Adrenal gland (tissue), 19 donors: ENCODE measurements at regions of chr14 and their contacts with region 1.

Region 1: DNA sequence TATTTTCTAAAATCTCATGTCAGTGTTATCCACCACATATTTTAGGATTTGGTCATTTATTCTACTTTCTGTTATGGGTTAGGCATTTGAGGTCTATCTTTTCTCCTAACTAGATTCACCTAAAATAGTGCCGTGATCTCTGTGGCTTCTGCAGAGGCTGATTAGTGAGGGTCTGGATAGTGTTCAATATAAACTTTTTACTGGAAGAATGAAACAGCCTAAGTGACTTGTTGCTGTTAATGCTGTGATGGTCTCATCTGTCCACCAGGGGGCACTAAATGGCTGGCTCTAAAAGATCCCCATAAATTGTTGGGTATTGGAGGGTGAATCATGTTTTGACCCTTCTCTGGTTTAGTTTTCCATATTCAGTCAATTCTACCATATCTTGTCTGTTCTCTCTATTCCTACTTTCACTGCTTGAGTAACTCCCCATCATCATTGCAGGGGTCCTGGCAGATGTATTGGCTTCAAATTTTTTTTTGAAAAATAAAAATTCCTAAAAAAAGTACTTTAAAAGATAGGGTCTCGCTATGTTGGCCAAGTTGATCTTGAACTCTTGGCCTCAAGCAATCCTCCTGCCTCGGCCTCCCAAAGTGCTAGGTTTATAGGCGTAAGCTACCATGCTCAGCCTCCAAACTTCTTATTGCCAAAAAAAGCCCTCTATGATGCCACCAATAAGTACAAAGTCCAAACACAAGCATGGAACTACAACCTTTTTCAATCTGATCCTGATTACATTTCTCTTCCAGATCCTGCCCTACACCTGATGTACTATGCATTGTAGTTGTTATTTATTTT is 6.9 kb downstream of the PABPN1 start:
- DNase-seq: peak; percentile 68 to 89 (median 78)
- H3K4me3 ChIP-seq: no peak overlapping the region
- H3K27ac ChIP-seq: no peak overlapping the region
- H3K4me1 ChIP-seq: peaks cover 2 to 10% of the 10 kb centered on the region in 2 donors
- H3K27me3 ChIP-seq: no peaks in the 10 kb centered on the region
- CTCF ChIP-seq: peak; percentile 79 to 91 (median 86)
- POLR2A ChIP-seq: no peak

Region 2: DNA sequence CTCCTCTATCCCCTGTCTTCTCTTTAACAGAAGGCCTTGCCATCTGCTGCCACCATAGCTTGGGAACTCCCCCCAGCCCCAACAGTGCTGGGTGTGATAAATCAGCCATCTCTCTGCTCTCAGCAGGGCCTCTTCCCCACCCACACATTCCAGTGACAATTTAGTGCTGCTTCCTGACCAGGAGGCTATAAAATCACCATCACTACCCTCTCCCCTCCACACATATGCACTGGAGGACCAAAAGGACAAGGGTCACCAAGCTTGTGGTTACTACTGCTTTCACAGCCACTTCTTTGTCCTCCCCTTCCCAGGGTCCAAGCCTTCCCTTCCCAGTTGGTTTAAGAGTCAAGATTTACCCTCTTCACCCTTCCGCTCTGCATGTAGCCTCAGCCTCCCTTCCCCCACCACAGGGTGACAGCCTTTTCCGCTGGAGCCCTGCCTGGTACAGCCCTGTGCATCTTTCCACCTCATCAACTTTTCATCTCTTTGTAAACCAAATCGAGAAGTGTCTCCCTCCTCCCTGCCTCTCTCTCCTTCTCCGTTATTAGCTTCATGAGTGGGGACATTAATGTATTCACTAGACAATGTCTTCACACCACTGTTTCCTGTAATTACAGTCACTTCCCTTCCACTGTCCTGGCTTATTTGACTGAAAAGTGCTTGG is 302.9 kb before region 1 on chr14:
- intact Hi-C with region 1: no loop called
- DNase-seq: no peak
- H3K4me3 ChIP-seq: no peak overlapping the region
- H3K27ac ChIP-seq: no peak overlapping the region
- H3K4me1 ChIP-seq: no peaks in the 10 kb centered on the region
- H3K27me3 ChIP-seq: no peaks in the 10 kb centered on the region
- CTCF ChIP-seq: no peak
- POLR2A ChIP-seq: no peak

Region 3: DNA sequence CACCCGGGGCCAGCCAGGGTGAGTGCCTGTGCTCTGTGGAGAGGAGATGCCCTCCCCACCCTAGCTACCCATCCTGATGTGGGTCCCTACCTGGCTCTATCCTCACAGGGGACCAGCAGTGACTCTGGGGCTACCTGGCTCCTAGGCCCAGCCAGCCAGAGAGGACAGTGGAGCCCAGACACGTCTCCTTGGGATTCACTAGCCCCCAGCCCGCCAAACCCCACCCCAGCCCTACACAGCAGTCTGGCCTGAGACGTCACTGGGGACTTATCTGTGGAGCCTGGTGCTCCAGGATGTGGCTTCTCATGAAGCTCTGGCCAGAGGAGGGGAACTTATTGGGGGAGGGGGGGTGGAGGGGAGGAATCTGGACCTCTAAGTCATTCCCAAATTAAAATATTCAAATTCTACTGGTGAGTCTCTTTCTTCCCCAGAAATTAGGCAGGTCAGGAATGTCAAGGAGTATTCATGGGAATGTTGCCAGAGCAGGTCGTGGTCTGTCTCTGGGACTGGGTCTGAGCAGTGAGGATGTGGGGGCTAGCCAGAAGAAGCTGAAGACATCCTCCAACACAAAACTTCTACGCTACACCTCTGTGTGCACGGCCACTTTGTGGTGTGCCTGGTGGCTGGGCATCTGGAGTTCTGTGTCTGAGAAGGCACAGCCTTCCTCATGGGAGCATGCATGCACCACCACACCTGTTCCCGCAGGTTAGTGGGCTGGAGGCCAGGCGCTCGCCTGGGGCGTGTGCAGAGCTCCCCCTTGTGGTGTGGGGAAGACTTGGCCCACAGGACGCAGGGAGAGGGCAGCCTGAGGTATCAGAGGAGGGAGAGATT is 51.4 kb after region 1 on chr14:
- intact Hi-C with region 1: loop called in 1 of 2 experiments (anchors 2 kb)
- DNase-seq: peak; percentile 33 to 63 (median 49)
- H3K4me3 ChIP-seq: no peak overlapping the region
- H3K27ac ChIP-seq: no peak overlapping the region
- H3K4me1 ChIP-seq: no peaks in the 10 kb centered on the region
- H3K27me3 ChIP-seq: no peaks in the 10 kb centered on the region
- CTCF ChIP-seq: peak; percentile 68 to 87 (median 80)
- POLR2A ChIP-seq: no peak

Region 4: GRCh38 chr14:23588884-23589598 is 260.9 kb after region 1 on chr14:
- intact Hi-C with region 1: no loop called
- DNase-seq: peak; percentile 91 to 98 (median 95)
- H3K4me3 ChIP-seq: no peak overlapping the region
- H3K27ac ChIP-seq: peak overlapping the region in 1 of 5 donors; percentile 70
- H3K4me1 ChIP-seq: peaks cover 0 to 5% of the 10 kb centered on the region in 2 donors
- H3K27me3 ChIP-seq: no peaks in the 10 kb centered on the region
- CTCF ChIP-seq: peak; percentile 61 to 93 (median 84)
- POLR2A ChIP-seq: no peak